Activated naive CD8-positive, alpha-beta T cell treated with anti-CD3 and anti-CD28 coated beads, Interleukin-2, amount 10 ng/mL, durations not matched to agents 7 days and 5 days (primary cell): ENCODE measurements at regions of chr18 and their contacts with region 1.

Region 1: DNA sequence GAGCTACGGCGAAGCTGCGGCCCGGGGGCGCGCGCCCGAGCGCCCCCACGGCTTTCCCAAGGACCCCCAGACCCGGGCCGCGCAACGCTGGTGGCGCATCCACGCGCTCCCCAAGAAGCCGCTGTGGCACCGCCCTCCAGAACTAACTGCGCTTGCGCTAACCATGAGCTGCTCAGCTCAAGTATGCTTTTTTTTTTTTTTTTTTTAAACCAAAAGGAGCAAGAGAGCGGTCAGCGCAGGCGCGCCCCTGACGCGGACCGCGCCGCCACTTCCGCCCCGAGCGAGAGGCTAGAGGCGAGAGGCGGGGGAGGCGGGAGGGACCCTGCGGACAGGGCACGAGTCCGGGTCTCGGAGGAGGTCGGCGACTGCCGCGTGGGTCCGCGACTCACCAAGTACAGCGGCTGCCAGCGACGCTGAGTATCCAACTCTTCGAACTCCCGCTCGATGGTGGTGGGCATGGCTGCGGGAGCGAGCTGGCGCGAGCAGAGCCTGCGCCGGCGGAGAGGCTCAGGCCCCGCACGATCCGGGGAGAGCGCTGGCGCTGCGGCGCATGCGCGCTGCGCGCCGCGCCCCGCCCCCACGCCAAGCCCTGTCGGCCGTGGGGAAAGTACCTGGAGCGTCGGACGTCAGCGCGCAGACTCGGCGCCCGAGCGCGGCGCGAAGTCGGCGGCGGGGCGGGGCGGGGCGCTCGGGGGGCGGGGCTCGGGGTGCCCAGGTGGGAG is at the start of gene PTPN2:
- DNase-seq: peak; percentile 97
- ATAC-seq: peak; percentile 92
- H3K4me3 Mint-ChIP-seq: peak within 1 kb of the TSS; percentile 90
- H3K27ac Mint-ChIP-seq: peak within 1 kb of the TSS; percentile 96
- H3K4me1 Mint-ChIP-seq: peaks cover 52% of the 10 kb centered on the region
- H3K27me3 Mint-ChIP-seq: no peaks in the 10 kb centered on the region
- total RNA-seq, gene PTPN2: 64.9 to 68.1 TPM

Region 2: DNA sequence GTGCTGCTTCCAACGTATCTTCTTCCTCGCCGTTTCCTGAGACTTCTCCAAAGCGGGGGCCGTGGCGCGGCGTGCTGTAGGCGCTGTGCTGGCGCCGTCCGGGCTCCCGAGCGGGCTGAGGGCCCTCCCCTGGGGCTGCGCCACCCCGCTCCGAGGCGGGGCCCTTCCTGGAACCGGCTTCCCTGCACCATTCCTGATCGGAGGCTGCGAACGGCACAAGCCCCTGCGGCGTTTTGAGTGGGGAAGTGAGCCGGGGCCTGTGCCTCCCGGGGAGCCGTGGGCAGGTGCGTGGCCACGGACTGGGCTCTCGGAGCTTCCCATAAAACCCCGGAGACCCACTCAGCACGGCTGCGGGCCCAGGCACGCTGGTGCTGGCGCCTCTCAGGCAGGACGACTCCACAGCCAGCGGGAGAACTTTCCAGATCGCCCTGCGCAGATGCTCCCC is 106.3 kb before region 1 on chr18:
- POLR2A ChIA-PET with region 1: interaction called, 56 read pairs
- DNase-seq: no peak
- ATAC-seq: no peak
- H3K4me3 Mint-ChIP-seq: peak overlapping the region; percentile 60
- H3K27ac Mint-ChIP-seq: no peak overlapping the region
- H3K4me1 Mint-ChIP-seq: peaks cover 2% of the 10 kb centered on the region
- H3K27me3 Mint-ChIP-seq: no peaks in the 10 kb centered on the region

Region 3: DNA sequence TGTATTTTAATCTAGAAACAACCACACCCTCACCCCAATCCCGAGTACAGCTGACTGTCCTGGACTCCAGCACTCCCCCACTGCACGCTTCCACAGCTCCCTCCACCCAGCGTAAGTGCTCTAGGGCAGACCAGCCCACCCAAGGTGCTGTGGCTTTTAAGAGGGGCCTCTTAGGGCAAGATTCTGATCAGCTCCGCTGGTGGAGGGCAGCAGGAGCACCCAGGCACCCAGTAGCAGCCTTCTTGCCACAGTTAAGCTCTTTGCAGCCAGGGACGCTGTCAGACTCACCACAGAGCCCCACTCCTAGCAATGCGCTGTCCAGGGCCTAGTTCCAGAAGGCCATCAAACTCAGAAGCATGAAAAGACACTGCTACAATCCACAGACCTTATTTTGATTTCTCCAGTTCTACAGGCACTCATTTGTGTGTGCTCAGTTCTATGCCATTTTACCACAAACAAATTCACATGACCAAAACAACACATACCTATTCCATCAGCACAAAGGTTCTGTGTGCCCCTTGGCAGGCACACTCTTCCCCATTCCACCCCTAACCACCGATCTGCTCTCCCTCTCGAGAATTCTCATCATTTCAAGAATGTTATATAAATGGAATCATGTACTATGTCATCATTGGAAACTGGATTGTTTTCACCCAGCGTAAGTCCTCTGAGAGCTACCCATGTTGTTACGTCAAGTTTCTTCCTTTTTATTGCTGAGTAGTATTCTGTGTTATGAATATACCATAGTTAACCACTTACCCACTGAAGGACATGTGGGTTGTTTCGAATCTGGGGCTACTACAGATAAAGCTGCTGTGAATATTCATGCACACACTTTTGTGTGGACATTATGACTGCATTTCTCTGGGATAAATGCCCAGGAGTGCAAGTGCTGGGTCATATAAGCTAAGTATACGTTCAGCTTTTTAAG is 40.2 kb before region 1 on chr18:
- POLR2A ChIA-PET with region 1: interaction called, 28 read pairs
- DNase-seq: no peak
- ATAC-seq: no peak
- H3K4me3 Mint-ChIP-seq: no peak overlapping the region
- H3K27ac Mint-ChIP-seq: peak overlapping the region; percentile 39
- H3K4me1 Mint-ChIP-seq: peaks cover 56% of the 10 kb centered on the region
- H3K27me3 Mint-ChIP-seq: no peaks in the 10 kb centered on the region

Region 4: GRCh38 chr18:12862467-12862866 is 21.4 kb before region 1 on chr18:
- POLR2A ChIA-PET with region 1: interaction called, 29 read pairs
- DNase-seq: no peak
- ATAC-seq: no peak
- H3K4me3 Mint-ChIP-seq: no peak overlapping the region
- H3K27ac Mint-ChIP-seq: no peak overlapping the region
- H3K4me1 Mint-ChIP-seq: peaks cover 43% of the 10 kb centered on the region
- H3K27me3 Mint-ChIP-seq: no peaks in the 10 kb centered on the region

Region 5: DNA sequence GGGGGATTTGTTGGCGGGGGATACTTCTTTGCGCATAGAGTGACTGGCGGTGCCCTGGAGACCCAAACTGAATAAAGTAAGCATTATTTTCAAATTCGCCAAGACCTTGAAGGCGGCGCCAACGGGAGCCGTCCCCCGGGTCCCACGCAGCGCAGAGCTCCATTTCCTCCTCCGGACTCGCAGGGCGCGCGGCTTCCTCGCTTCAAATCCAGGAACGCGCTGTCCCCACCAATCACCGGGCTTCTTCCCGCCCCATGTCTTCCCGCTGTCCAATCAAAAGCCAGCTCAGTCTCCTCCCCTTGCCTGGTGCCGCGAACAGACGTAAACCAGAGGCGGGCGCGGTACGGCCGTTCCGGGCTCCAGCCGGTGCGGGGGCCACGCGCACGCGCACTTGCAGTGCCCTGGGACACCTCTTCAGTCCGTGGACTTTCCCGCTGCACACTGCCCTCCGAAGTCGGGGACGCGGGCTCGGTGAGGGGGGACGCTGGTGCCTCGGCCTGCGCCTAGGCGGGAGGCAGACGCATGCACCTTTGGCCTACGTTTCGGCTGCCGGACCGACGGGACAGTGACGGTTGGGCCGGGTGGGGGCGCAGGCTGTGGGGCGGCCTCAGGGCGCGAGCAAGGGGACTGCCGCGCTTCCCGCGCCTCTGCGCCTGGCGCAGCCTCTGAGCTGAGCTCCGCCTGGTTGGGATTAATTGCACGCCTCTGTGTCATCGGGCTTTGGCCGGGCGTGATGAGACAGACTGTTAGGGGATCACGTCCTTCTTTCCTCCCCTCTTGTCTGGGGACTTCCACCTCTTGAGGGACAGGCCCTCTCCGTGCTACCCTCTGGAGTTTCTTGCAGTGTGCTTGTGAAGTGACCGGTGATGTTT is 107.4 kb after region 1 on chr18 and contains the start of gene CEP192:
- POLR2A ChIA-PET with region 1: interaction called, 13 read pairs
- DNase-seq: peak; percentile 96
- ATAC-seq: peak; percentile 93
- H3K4me3 Mint-ChIP-seq: peak within 1 kb of the TSS; percentile 100
- H3K27ac Mint-ChIP-seq: peak within 1 kb of the TSS; percentile 87
- H3K4me1 Mint-ChIP-seq: peaks cover 15% of the 10 kb centered on the region
- H3K27me3 Mint-ChIP-seq: no peaks in the 10 kb centered on the region
- total RNA-seq, gene CEP192: 49.8 to 50.6 TPM